Heart left ventricle (tissue), 16 donors: ENCODE measurements at regions of chr1 and their contacts with region 1.

Region 1: GRCh38 chr1:175035865-175036264 is 12.6 kb upstream of the MRPS14 start:
- DNase-seq: no peak
- ATAC-seq: no peak
- H3K4me3 ChIP-seq: no peak overlapping the region
- H3K27ac ChIP-seq: no peak overlapping the region
- H3K4me1 ChIP-seq: no peaks in the 10 kb centered on the region
- H3K27me3 ChIP-seq: no peaks in the 10 kb centered on the region
- CTCF ChIP-seq: no peak
- POLR2A ChIP-seq: no peak

Region 2: GRCh38 chr1:175124861-175125260 is 89.0 kb after region 1 on chr1:
- intact Hi-C with region 1: loop called in 8 of 10 experiments (anchors 2 to 5 kb)
- DNase-seq: no peak
- ATAC-seq: no peak
- H3K4me3 ChIP-seq: no peak overlapping the region
- H3K27ac ChIP-seq: peak overlapping the region in 10 of 12 donors; percentile 17 to 65 (median 44)
- H3K4me1 ChIP-seq: peaks cover 0 to 35% (median 20%) of the 10 kb centered on the region in 12 donors
- H3K27me3 ChIP-seq: no peaks in the 10 kb centered on the region
- CTCF ChIP-seq: no peak
- POLR2A ChIP-seq: no peak

Region 3: GRCh38 chr1:175129997-175130648 is 94.3 kb after region 1 on chr1:
- intact Hi-C with region 1: loop called in 6 of 10 experiments (anchors 2 to 5 kb)
- DNase-seq: peak in 2 of 5 donors; percentile 31 to 38
- ATAC-seq: peak; percentile 48 to 81 (median 66)
- H3K4me3 ChIP-seq: no peak overlapping the region
- H3K27ac ChIP-seq: peak overlapping the region in 10 of 12 donors; percentile 1 to 65 (median 37)
- H3K4me1 ChIP-seq: peaks cover 0 to 52% (median 31%) of the 10 kb centered on the region in 12 donors
- H3K27me3 ChIP-seq: no peaks in the 10 kb centered on the region
- CTCF ChIP-seq: no peak
- POLR2A ChIP-seq: no peak

Region 4: DNA sequence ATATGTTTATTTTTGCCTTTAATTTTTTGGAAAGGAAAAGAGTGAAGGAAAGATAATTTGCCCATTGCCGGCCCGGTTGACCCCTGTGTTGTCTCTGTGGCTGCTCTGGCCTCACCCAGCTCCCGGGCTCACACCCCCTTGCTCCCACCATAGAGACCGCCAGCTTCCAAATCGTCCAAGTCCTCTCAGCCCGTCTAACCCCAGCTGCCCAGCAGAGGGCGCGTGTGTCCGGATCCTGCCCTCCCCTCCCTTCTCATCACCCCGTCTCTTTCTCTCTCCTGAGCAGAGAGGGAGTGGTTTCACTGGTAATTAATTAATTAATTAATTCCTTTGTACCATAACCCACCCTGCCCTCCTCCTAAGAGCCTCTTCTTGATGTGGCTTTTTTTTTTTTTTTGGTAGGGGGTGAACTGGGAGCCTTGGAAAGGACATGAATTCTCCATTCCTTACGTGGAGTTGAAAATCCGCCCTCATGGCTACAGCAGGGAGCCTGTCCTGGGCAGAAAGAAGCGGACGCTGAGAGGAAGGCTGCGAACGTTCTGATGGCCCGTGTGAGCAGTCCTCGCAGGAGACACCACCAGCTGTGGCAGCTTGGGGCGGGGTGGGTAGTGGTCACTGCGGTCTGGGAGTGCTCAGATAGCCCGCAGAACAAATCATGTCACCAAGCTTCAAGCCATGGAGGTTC is 110.8 kb after region 1 on chr1:
- intact Hi-C with region 1: loop called in 2 of 10 experiments (anchors 5 kb)
- DNase-seq: peak; percentile 50 to 82 (median 61)
- ATAC-seq: peak; percentile 56 to 90 (median 81)
- H3K4me3 ChIP-seq: peak overlapping the region in 1 of 12 donors; percentile 6
- H3K27ac ChIP-seq: no peak overlapping the region
- H3K4me1 ChIP-seq: peaks cover 0 to 5% (median 0%) of the 10 kb centered on the region in 12 donors
- H3K27me3 ChIP-seq: no peaks in the 10 kb centered on the region
- CTCF ChIP-seq: peak; percentile 68 to 88 (median 76)
- POLR2A ChIP-seq: no peak